ENCODE measurements at regions of chr12 and their contacts with region 1.

Region 1: GRCh38 chr12:95217377-95218149 is at the starts of genes FGD6 and VEZT:
- DNase-seq: peak; percentile 98
- H3K4me3 Mint-ChIP-seq: peak within 1 kb of the TSS; percentile 98
- H3K27ac Mint-ChIP-seq: peak within 1 kb of the TSS; percentile 99
- H3K4me1 Mint-ChIP-seq: peaks cover 26% of the 10 kb centered on the region
- H3K27me3 Mint-ChIP-seq: peaks cover 13% of the 10 kb centered on the region
- total RNA-seq, gene FGD6: 0.69 and 1.1 TPM in 2 replicates
- total RNA-seq, gene VEZT: 62.6 and 63.1 TPM in 2 replicates

Region 2: GRCh38 chr12:93434256-93434865 is 1783.2 kb before region 1 on chr12:
- intact Hi-C with region 1: loop called (anchors 10 kb)
- DNase-seq: no peak
- H3K4me3 Mint-ChIP-seq: no peak overlapping the region
- H3K27ac Mint-ChIP-seq: no peak overlapping the region
- H3K4me1 Mint-ChIP-seq: peaks cover 46% of the 10 kb centered on the region
- H3K27me3 Mint-ChIP-seq: no peaks in the 10 kb centered on the region

Region 3: DNA sequence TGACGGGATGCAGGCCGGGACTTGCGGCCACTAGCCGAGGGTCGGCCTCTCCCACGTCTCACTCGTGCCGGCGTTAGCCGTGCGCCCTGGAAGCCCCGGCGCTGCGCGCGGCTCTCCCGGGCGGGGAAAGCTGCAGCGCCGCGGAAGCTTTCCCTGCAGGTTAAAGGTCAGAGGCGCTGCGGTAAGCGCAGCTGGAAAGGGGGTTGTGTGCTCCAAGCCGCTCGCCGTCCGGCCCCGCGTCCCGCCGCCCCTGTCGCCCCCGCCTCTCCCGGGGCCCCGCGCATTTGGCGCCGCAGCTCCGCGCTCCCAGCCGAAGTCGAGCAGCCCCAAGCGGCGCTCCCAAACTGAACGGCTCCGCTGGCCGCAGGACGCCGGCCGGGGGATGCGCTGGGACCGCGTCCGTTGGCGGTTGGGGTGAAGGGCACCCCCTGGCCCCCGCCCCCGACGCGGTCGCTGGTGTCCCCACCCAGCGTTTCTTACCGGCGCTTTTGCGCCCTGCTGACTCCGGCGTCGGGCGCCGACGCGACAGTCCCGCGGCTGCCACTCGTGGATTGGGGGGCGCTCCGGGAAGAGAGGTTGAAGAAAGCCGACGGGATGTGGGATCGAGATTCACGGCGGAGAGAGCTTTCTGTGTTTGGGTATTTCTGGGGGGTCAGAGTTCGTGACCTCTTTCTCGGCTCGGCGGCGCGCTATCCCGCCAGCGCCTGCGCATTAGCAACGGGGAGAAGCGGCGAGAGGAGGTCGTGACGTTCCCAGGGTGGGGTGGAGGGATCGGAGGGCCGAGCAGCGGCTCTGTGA is 144.5 kb before region 1 on chr12 and contains the start of gene NR2C1:
- intact Hi-C with region 1: loop called (anchors 1 kb)
- DNase-seq: peak; percentile 90
- H3K4me3 Mint-ChIP-seq: peak within 1 kb of the TSS; percentile 91
- H3K27ac Mint-ChIP-seq: peak within 1 kb of the TSS; percentile 85
- H3K4me1 Mint-ChIP-seq: peaks cover 13% of the 10 kb centered on the region
- H3K27me3 Mint-ChIP-seq: peaks cover 5% of the 10 kb centered on the region
- total RNA-seq, gene NR2C1: 28.5 and 30.0 TPM in 2 replicates

Region 4: DNA sequence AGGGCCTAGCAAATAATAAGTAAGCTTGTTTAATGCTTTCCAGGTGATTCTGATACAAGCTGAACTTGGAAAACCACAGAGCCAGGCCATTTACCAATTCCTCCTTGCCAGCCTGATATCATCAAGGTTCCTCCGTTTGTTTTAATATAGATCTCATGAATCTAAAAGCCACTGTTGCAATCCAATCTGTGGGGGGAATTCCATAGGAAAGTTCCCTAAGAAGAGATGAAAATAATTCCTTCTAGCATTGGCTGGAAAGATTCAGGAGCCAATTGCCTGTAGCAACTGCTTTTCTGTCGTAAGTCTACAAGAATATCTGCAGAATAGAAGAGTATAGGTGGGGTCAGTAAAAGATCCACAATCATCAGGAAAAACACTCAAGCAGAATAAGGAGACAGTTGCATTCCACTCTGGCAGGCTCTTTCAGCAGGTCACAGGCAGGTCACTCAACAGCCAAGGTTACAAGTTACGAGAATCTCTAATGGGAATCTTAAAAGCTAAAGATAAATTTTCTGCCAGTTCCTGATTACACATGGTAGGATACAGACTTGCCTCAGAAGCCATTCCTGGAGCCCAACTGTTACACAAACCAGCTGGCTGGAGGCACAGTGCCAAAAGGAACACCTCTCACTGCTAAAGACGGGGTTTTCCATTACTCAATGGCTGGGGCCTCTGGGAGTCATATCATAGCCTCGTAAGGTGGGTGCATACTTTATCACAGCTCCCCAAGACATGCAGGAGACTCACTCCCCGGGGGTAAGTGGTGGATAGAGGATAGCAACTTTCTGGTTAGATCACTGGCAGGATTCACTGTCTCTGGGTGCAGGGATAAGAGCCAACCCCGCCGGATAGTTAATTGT is 43.9 kb before region 1 on chr12:
- intact Hi-C with region 1: no loop called
- DNase-seq: no peak
- H3K4me3 Mint-ChIP-seq: no peak overlapping the region
- H3K27ac Mint-ChIP-seq: no peak overlapping the region
- H3K4me1 Mint-ChIP-seq: no peaks in the 10 kb centered on the region
- H3K27me3 Mint-ChIP-seq: peaks cover 3% of the 10 kb centered on the region

Region 5: GRCh38 chr12:95240556-95240955 is 23.0 kb after region 1 on chr12:
- intact Hi-C with region 1: loop called (anchors 2 kb)
- DNase-seq: no peak
- H3K4me3 Mint-ChIP-seq: no peak overlapping the region
- H3K27ac Mint-ChIP-seq: no peak overlapping the region
- H3K4me1 Mint-ChIP-seq: peaks cover 16% of the 10 kb centered on the region
- H3K27me3 Mint-ChIP-seq: no peaks in the 10 kb centered on the region

Region 6: GRCh38 chr12:95548539-95549391 is 331.2 kb after region 1 on chr12:
- intact Hi-C with region 1: loop called (anchors 5 kb)
- DNase-seq: peak; percentile 62
- H3K4me3 Mint-ChIP-seq: peak overlapping the region; percentile 88
- H3K27ac Mint-ChIP-seq: peak overlapping the region; percentile 63
- H3K4me1 Mint-ChIP-seq: peaks cover 45% of the 10 kb centered on the region
- H3K27me3 Mint-ChIP-seq: peaks cover 15% of the 10 kb centered on the region

Region 7: DNA sequence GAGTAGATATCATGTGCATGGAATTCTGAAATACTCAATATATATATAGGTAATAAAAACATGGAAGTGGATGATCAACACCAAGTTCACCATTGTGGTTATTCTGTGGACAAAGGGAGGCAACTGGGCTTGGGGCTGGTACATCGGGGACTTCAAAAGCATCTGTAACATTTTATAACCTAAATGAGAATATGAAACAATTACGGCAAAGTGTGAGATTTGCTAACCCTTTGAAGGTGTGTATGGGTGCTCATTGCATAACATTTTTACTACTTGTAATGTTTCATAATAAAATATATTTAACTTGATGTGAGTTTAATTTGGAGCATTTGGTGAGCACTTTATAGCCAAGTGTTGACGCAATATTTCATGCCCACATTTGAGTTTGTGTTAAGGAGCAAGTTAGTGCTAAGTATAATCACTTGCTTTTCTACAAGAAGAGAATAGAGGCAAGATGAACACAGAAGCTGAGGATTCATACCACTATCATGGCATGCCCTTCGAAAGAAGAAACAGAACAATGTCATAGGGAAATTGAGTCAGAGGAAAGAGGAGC is 463.7 kb after region 1 on chr12:
- intact Hi-C with region 1: no loop called
- DNase-seq: no peak
- H3K4me3 Mint-ChIP-seq: no peak overlapping the region
- H3K27ac Mint-ChIP-seq: no peak overlapping the region
- H3K4me1 Mint-ChIP-seq: no peaks in the 10 kb centered on the region
- H3K27me3 Mint-ChIP-seq: peaks cover 2% of the 10 kb centered on the region

Measured in activated T-helper 2 cell treated with anti-CD3 and anti-CD28 coated beads, Interferon-gamma antibody, Interleukin-2, Interleukin-4, amounts not matched to agents 10 μg/mL and 5 μg/mL and 100 μg/mL, durations not matched to agents 14 hours and 24 hours and 36 hours (primary cell).